CD8-positive, alpha-beta T cell (primary cell): ENCODE measurements at regions of chr19 and their contacts with region 1.

Region 1: GRCh38 chr19:41883821-41884733 is 1.1 kb downstream of the ARHGEF1 start:
- DNase-seq: peak; percentile 78 to 96 (median 90)
- ATAC-seq: peak; percentile 41
- H3K4me3 ChIP-seq: peak overlapping the region; percentile 97 to 99
- H3K4me3 Mint-ChIP-seq: peak overlapping the region; percentile 93
- H3K27ac ChIP-seq: peak overlapping the region; percentile 78 to 90
- H3K27ac Mint-ChIP-seq: peak overlapping the region; percentile 99
- H3K4me1 ChIP-seq: peaks cover 50% of the 10 kb centered on the region
- H3K4me1 Mint-ChIP-seq: peaks cover 68% of the 10 kb centered on the region
- H3K27me3 ChIP-seq: no peaks in the 10 kb centered on the region
- H3K27me3 Mint-ChIP-seq: no peaks in the 10 kb centered on the region
- CTCF ChIP-seq: no peak

Region 2: GRCh38 chr19:39996811-39997594 is 1887.1 kb before region 1 on chr19 and contains the start of gene ZNF546:
- CTCF ChIA-PET with region 1: no interaction called
- POLR2A ChIA-PET with region 1: no interaction called
- intact Hi-C with region 1: loop called in 1 of 2 experiments (anchors 5 kb)
- DNase-seq: peak; percentile 70 to 94 (median 90)
- ATAC-seq: peak; percentile 88
- H3K4me3 ChIP-seq: peak within 1 kb of the TSS; percentile 80 to 85
- H3K4me3 Mint-ChIP-seq: peak within 1 kb of the TSS; percentile 90
- H3K27ac ChIP-seq: peak within 1 kb of the TSS; percentile 77 to 88
- H3K27ac Mint-ChIP-seq: peak within 1 kb of the TSS; percentile 92
- H3K4me1 ChIP-seq: peaks cover 15% of the 10 kb centered on the region
- H3K4me1 Mint-ChIP-seq: peaks cover 41% of the 10 kb centered on the region
- H3K27me3 ChIP-seq: no peaks in the 10 kb centered on the region
- H3K27me3 Mint-ChIP-seq: no peaks in the 10 kb centered on the region
- CTCF ChIP-seq: no peak
- total RNA-seq, gene ZNF546: 1.6 to 2.4 TPM

Region 3: DNA sequence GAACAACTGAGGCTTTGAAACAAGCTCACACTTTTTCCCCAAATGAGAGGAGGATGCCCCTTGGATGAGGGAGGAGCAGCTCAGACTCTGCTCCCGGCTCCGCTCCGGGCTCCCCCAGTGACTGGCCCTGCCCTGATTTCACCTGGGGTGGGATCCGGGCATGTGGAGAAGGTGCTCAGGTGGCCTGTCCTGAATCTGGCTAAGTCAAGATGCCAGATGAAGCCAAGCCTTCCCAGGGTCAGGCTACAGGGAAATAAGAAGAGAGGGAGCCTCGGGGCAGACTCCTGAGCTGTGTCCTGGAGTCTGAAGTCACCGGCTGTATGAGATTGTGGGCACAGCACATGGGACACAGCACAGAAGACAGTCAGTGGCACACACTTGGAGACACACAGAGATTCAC is 165.3 kb before region 1 on chr19:
- CTCF ChIA-PET with region 1: no interaction called
- POLR2A ChIA-PET with region 1: no interaction called
- intact Hi-C with region 1: no loop called
- DNase-seq: no peak
- ATAC-seq: no peak
- H3K4me3 ChIP-seq: no peak overlapping the region
- H3K4me3 Mint-ChIP-seq: no peak overlapping the region
- H3K27ac ChIP-seq: no peak overlapping the region
- H3K27ac Mint-ChIP-seq: no peak overlapping the region
- H3K4me1 ChIP-seq: no peaks in the 10 kb centered on the region
- H3K4me1 Mint-ChIP-seq: no peaks in the 10 kb centered on the region
- H3K27me3 ChIP-seq: peaks cover 0 to 3% of the 10 kb centered on the region in 2 experiments
- H3K27me3 Mint-ChIP-seq: peaks cover 40% of the 10 kb centered on the region
- CTCF ChIP-seq: no peak

Region 4: DNA sequence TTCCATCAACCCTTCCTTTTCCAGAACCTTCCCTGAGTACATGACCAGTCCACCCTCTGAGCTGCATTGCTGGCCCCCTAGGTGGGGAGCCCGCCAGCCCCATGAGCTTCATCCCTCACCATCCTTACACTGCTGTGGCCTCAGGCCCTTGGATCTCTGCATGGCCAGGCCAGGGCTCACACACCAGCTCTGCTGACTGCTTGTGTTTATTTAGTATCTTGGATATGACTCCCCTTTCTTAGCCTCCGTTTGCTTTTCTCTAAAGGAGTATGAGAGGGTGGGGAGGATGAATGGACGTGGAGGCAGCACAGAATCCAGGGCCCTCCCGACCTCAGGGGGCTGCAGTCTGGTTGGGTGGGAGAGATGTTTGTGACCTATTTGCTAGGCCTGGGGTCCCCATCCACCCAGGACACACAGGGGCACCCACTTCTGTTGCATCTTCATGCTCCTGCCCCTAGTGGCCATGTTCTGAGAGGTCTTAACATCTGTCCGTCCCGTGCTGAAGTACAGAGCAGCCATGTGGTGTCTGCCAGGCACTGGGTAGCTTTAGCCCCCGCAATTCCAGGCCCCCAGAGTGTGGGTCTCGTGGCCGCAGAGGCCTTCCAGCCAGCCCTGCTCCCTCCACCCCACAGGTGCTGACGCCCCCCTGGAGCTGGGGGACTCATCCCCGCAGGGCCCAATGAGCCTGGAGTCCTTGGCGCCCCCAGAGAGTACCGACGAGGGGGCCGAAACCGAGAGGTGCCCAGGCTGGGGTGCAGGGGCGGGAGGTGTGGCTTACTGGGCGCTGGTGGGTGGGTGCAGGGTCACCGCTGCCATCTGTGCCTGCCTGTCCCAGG is 11.9 kb after region 1 on chr19:
- CTCF ChIA-PET with region 1: interaction called, 10 read pairs
- POLR2A ChIA-PET with region 1: interaction called, 253 read pairs
- intact Hi-C with region 1: no loop called
- DNase-seq: peak in 3 of 9 experiments; percentile 40 to 62 (median 48)
- ATAC-seq: peak; percentile 64
- H3K4me3 ChIP-seq: no peak overlapping the region
- H3K4me3 Mint-ChIP-seq: peak overlapping the region; percentile 61
- H3K27ac ChIP-seq: peak overlapping the region; percentile 37 to 59
- H3K27ac Mint-ChIP-seq: peak overlapping the region; percentile 90
- H3K4me1 ChIP-seq: peaks cover 88% of the 10 kb centered on the region
- H3K4me1 Mint-ChIP-seq: peaks cover 69% of the 10 kb centered on the region
- H3K27me3 ChIP-seq: no peaks in the 10 kb centered on the region
- H3K27me3 Mint-ChIP-seq: no peaks in the 10 kb centered on the region
- CTCF ChIP-seq: peak; percentile 36

Region 5: DNA sequence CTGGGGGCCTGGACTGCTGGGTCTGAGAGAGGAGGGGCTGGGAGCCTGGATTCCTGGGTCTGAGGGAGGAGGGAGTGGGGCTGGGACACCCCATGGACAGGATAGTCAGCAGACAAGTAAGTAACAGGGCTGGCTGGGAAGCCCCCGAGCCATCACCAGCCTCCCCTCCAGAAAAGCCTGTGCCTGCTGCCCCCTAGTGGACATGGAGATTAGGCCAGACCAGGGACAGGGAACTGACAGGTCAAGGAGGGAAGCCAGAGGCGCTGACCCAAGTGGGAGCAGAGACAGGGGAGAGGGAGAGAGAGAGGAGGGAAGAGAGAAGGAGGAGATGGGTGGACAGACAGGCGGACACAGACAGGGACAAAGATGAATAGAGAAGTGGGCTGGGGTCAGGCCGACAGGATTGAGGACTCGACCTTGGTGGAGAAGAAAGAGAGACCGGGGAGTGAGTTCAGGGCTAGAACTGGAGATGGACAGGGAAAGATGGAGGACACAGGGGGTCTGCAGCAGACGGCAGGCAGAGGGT is 50.8 kb after region 1 on chr19:
- CTCF ChIA-PET with region 1: interaction called, 9 read pairs
- POLR2A ChIA-PET with region 1: interaction called, 3 read pairs
- intact Hi-C with region 1: loop called (anchors 1 to 2 kb)
- DNase-seq: peak; percentile 63 to 89 (median 81)
- ATAC-seq: peak; percentile 37
- H3K4me3 ChIP-seq: no peak overlapping the region
- H3K4me3 Mint-ChIP-seq: peak overlapping the region; percentile 32
- H3K27ac ChIP-seq: no peak overlapping the region
- H3K27ac Mint-ChIP-seq: peak overlapping the region; percentile 84
- H3K4me1 ChIP-seq: peaks cover 45% of the 10 kb centered on the region
- H3K4me1 Mint-ChIP-seq: peaks cover 55% of the 10 kb centered on the region
- H3K27me3 ChIP-seq: peaks cover 0 to 5% of the 10 kb centered on the region in 2 experiments
- H3K27me3 Mint-ChIP-seq: no peaks in the 10 kb centered on the region
- CTCF ChIP-seq: peak; percentile 87

Region 6: DNA sequence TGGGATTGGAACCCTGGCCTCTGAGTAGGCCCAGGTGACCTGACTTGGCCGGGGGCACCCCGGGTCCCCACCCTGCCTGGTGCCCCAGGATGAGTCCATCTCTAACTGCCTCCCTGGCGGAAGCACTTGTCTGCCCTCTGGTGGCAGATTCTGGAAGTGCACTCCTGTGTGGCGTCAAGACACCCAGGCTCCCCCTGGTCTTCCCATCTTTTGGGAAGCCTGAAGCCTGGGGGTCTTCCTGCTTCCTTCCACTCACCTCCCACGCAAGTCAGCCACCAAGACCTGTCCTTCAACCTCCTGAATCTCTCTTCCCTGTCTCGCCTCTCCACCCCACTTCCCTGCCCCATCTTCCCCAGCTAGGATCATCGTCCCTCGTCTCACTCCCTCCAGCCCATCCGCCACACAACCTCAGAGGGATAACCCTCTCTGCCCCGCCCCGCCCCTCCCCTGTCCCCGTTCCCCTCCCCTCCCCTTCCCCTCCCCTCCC is 67.7 kb after region 1 on chr19:
- CTCF ChIA-PET with region 1: interaction called, 26 read pairs
- POLR2A ChIA-PET with region 1: interaction called, 27 read pairs
- intact Hi-C with region 1: no loop called
- DNase-seq: peak; percentile 73 to 97 (median 89)
- ATAC-seq: peak; percentile 88
- H3K4me3 ChIP-seq: no peak overlapping the region
- H3K4me3 Mint-ChIP-seq: no peak overlapping the region
- H3K27ac ChIP-seq: no peak overlapping the region
- H3K27ac Mint-ChIP-seq: peak overlapping the region; percentile 85
- H3K4me1 ChIP-seq: peaks cover 15% of the 10 kb centered on the region
- H3K4me1 Mint-ChIP-seq: peaks cover 31% of the 10 kb centered on the region
- H3K27me3 ChIP-seq: no peaks in the 10 kb centered on the region
- H3K27me3 Mint-ChIP-seq: no peaks in the 10 kb centered on the region
- CTCF ChIP-seq: peak; percentile 96

Region 7: GRCh38 chr19:42075616-42076379 is 191.7 kb after region 1 on chr19 and contains the start of gene ZNF574:
- CTCF ChIA-PET with region 1: no interaction called
- POLR2A ChIA-PET with region 1: no interaction called
- intact Hi-C with region 1: loop called in 1 of 2 experiments (anchors 5 kb)
- DNase-seq: peak; percentile 97 to 100 (median 98)
- ATAC-seq: peak; percentile 95
- H3K4me3 ChIP-seq: peak within 1 kb of the TSS; percentile 72 to 76
- H3K4me3 Mint-ChIP-seq: peak within 1 kb of the TSS; percentile 97
- H3K27ac ChIP-seq: peak within 1 kb of the TSS; percentile 94 to 100
- H3K27ac Mint-ChIP-seq: peak within 1 kb of the TSS; percentile 99
- H3K4me1 ChIP-seq: peaks cover 21% of the 10 kb centered on the region
- H3K4me1 Mint-ChIP-seq: peaks cover 37% of the 10 kb centered on the region
- H3K27me3 ChIP-seq: no peaks in the 10 kb centered on the region
- H3K27me3 Mint-ChIP-seq: no peaks in the 10 kb centered on the region
- CTCF ChIP-seq: no peak
- total RNA-seq, gene ZNF574: 25.0 to 26.2 TPM